ENCODE measurements at regions of chr13 and their contacts with region 1.

Region 1: DNA sequence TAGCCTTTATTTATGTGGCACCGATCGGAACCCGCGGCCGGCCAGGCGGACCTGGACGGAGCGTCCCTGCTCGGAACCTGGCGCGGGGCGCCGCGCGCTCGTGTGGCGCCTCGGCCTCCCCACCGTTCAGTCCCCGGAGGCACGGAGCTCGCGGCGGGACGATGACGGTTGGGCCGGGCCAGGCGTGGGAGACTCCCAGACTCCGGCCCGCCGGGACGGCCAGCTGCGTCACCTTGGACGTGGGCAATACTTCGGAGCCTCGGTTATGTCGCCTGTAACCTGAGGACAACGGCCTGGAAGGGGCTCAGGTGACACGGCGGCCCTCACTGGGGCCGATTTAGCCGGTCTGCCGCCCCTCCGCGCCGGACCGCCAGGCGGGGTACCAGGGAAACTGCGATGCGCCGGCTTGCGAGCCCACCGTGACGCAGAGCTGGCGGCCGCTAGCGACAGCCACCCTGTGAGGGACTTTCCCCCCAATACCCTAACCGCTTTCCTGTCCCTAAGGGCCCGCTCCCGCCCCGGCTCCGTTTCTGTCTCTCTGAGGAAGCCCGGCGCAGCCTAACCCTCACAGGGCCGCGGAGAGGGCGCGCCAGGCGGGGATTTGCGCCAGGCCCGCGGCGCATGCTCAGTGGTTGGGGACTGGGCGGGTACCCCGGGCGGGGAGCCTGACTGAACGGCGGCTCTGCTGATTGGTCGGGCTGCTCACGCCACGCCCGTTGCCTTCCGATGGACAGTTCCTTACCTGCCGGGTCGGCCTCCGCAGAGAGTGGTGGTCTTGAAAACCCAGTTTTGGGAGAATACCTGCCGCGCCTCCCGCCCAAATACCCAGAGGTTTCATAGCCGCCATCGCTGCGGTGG is 109.5 kb upstream of the DOCK9 start:
- DNase-seq: peak; percentile 83 to 95 (median 92)
- ATAC-seq: peak; percentile 85
- H3K4me3 ChIP-seq: peak overlapping the region; percentile 97
- H3K4me3 Mint-ChIP-seq: peak overlapping the region; percentile 92 to 100 (median 98)
- H3K27ac ChIP-seq: peak overlapping the region; percentile 95
- H3K27ac Mint-ChIP-seq: peak overlapping the region; percentile 96 to 99 (median 98)
- H3K4me1 ChIP-seq: peaks cover 29 to 31% of the 10 kb centered on the region in 2 donors
- H3K4me1 Mint-ChIP-seq: peaks cover 26 to 53% (median 42%) of the 10 kb centered on the region in 7 donors
- H3K27me3 ChIP-seq: no peaks in the 10 kb centered on the region
- H3K27me3 Mint-ChIP-seq: peaks cover 0 to 5% (median 3%) of the 10 kb centered on the region in 5 donors

Region 2: DNA sequence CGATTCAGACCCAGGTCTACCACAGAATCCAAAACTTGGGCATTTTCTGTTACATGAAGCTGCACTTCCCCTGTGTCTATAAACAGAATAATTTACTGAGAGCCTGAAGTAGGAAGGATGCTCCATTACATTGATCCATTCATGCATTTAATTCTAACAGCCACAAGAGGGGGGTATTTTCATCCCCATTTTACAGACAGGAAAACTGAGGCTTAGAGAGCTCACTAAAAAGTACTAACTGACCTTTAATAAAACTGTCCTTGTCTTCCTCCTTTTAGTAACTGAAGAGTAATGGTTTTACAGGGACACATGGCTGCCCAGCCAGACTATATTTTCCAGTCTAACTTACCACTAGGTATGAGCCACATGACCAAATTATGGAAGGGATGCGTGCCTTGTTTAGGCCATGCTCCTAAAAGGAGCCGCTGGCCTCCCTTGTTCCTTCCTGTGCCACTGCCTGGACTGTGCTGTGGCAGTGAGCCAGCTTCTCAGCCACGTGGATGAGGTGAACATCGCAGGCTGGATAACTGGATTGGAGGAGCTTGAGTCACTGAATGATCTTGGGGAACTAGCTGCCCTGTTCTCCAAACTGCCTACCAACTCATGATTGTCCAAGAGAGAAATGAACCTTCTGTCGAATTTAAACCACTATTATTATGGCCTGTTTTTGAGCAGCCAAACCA is 217.8 kb before region 1 on chr13:
- CTCF ChIA-PET with region 1: no interaction called
- POLR2A ChIA-PET with region 1: interaction called, 3 read pairs
- intact Hi-C with region 1: loop called in 1 of 2 experiments (anchors 1 kb)
- DNase-seq: peak in 1 of 9 donors; percentile 3
- ATAC-seq: no peak
- H3K4me3 ChIP-seq: no peak overlapping the region
- H3K4me3 Mint-ChIP-seq: no peak overlapping the region
- H3K27ac ChIP-seq: no peak overlapping the region
- H3K27ac Mint-ChIP-seq: peak overlapping the region in 3 of 9 donors; percentile 11 to 57 (median 23)
- H3K4me1 ChIP-seq: no peaks in the 10 kb centered on the region
- H3K4me1 Mint-ChIP-seq: peaks cover 0 to 33% (median 17%) of the 10 kb centered on the region in 7 donors
- H3K27me3 ChIP-seq: no peaks in the 10 kb centered on the region
- H3K27me3 Mint-ChIP-seq: no peaks in the 10 kb centered on the region

Region 3: GRCh38 chr13:99051768-99052455 is 35.4 kb before region 1 on chr13:
- CTCF ChIA-PET with region 1: interaction called, 4 read pairs
- POLR2A ChIA-PET with region 1: interaction called, 77 read pairs
- intact Hi-C with region 1: loop called (anchors 1 to 2 kb)
- DNase-seq: peak in 7 of 9 donors; percentile 48 to 81 (median 71)
- ATAC-seq: peak; percentile 65
- H3K4me3 ChIP-seq: peak overlapping the region; percentile 49
- H3K4me3 Mint-ChIP-seq: peak overlapping the region; percentile 75 to 88 (median 80)
- H3K27ac ChIP-seq: peak overlapping the region; percentile 61
- H3K27ac Mint-ChIP-seq: peak overlapping the region; percentile 72 to 96 (median 91)
- H3K4me1 ChIP-seq: peaks cover 72 to 95% of the 10 kb centered on the region in 2 donors
- H3K4me1 Mint-ChIP-seq: peaks cover 68 to 100% (median 92%) of the 10 kb centered on the region in 7 donors
- H3K27me3 ChIP-seq: no peaks in the 10 kb centered on the region
- H3K27me3 Mint-ChIP-seq: peaks cover 0 to 10% (median 0%) of the 10 kb centered on the region in 5 donors

Region 4: DNA sequence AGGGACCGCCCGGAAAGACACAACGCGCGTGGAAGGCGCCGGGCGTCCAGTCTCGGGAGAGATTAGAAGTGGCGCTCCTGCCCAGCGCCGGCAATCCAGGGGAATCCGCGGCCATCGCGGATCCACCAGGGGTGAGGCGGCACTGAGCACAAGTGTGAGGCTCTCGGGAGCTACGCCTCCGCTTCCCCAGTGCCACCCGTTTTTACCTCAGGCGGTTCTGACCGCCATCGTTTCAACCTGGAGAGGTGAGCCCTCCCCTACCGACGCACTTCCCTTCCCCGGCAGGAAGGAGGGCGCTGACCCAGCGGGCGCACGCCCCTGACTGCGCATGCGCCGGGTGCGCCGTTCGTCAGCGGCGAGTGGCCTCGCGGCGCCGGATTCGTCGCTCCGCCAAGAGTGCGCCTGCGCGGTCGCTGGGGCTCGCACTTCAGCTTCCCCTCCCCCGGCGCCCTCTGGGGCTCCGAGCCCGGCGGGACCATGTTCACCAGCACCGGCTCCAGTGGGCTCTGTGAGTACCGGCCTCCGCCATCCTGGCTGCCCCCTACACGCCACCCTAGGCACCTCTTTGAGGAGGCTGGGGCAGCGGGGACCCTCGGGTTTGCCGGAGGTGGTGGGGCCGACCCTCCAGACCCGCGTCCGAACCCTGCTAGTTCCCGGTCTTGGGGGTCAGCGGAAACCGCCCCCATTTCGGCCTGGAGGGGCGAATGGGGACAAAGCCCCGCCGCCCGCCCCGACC is 113.3 kb after region 1 on chr13 and contains the start of gene UBAC2:
- CTCF ChIA-PET with region 1: no interaction called
- POLR2A ChIA-PET with region 1: interaction called, 23 read pairs
- intact Hi-C with region 1: loop called (anchors 1 kb)
- DNase-seq: peak; percentile 95 to 99 (median 98)
- ATAC-seq: peak; percentile 88
- H3K4me3 ChIP-seq: peak within 1 kb of the TSS; percentile 74
- H3K4me3 Mint-ChIP-seq: peak within 1 kb of the TSS; percentile 90 to 100 (median 97)
- H3K27ac ChIP-seq: peak within 1 kb of the TSS; percentile 99
- H3K27ac Mint-ChIP-seq: peak within 1 kb of the TSS; percentile 92 to 98 (median 95)
- H3K4me1 ChIP-seq: peaks cover 38 to 51% of the 10 kb centered on the region in 2 donors
- H3K4me1 Mint-ChIP-seq: peaks cover 42 to 74% (median 61%) of the 10 kb centered on the region in 7 donors
- H3K27me3 ChIP-seq: no peaks in the 10 kb centered on the region
- H3K27me3 Mint-ChIP-seq: peaks cover 0 to 2% (median 0%) of the 10 kb centered on the region in 5 donors
- total RNA-seq, gene UBAC2: 63.3 to 114 (median 90.2) TPM

Region 5: DNA sequence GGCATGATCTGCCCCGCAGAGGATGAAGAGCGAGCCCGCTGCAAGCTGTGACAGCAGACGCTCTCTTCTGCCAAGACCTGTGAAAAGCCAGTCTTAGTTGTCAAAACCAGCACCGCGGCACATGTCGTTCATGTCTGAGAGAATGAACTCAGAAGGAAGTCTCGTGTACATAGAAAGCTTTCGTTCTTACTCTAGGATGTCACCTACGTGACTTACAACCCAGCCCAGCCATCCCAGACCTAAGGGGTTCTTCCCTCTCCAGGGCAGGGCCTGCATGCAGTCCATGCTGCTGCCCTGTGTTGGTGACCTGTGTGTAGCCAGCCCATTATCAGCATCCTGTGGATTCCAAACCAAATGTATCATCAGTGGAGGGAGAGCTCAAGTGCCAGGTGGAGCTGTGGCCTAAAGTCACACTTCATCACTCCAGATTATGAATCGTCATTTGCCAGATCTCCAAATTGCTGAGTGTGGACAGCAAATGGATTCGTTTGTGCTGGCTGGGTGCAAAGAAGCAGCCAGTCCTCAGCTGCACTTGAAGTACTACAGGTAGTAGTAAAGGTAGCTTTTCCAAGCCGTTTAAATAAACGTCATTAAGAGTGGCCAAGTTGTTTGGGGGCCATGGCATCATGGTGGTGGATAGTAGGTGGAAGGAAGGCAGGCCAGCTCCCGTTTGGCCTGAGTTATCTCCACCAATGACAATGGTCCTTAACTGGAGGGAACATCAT is 293.8 kb after region 1 on chr13:
- CTCF ChIA-PET with region 1: no interaction called
- POLR2A ChIA-PET with region 1: interaction called, 4 read pairs
- intact Hi-C with region 1: loop called in 1 of 2 experiments (anchors 5 kb)
- DNase-seq: peak in 8 of 9 donors; percentile 55 to 73 (median 62)
- ATAC-seq: peak; percentile 51
- H3K4me3 ChIP-seq: peak overlapping the region; percentile 1
- H3K4me3 Mint-ChIP-seq: peak overlapping the region; percentile 63 to 85 (median 76)
- H3K27ac ChIP-seq: peak overlapping the region; percentile 85
- H3K27ac Mint-ChIP-seq: peak overlapping the region; percentile 94 to 99 (median 98)
- H3K4me1 ChIP-seq: peaks cover 77 to 88% of the 10 kb centered on the region in 2 donors
- H3K4me1 Mint-ChIP-seq: peaks cover 48 to 100% (median 98%) of the 10 kb centered on the region in 7 donors
- H3K27me3 ChIP-seq: no peaks in the 10 kb centered on the region
- H3K27me3 Mint-ChIP-seq: no peaks in the 10 kb centered on the region

Region 6: DNA sequence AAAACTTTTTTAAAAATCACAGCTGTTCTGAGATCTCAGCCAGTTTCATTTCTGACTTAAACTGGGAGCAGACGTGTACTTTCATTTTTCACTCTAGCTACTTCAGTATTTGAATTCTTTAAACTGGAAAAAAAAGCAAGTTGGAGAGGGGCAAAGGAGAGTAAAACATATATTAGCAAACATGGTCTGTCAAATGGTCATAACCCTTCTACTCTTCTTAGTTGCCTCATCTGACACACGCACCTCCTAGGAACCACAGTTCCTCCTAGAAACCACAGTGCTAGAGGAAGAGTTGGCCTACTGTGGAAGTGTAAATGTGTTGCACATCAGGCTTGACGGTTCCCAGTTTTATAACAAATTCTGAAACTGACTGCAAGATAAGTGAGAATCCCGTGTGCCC is 461.1 kb after region 1 on chr13:
- CTCF ChIA-PET with region 1: no interaction called
- POLR2A ChIA-PET with region 1: no interaction called
- intact Hi-C with region 1: no loop called
- DNase-seq: no peak
- ATAC-seq: peak; percentile 49
- H3K4me3 ChIP-seq: no peak overlapping the region
- H3K4me3 Mint-ChIP-seq: peak overlapping the region in 1 of 10 donors; percentile 14
- H3K27ac ChIP-seq: peak overlapping the region; percentile 29
- H3K27ac Mint-ChIP-seq: peak overlapping the region; percentile 29 to 97 (median 79)
- H3K4me1 ChIP-seq: peaks cover 3 to 9% of the 10 kb centered on the region in 2 donors
- H3K4me1 Mint-ChIP-seq: peaks cover 4 to 40% (median 19%) of the 10 kb centered on the region in 7 donors
- H3K27me3 ChIP-seq: no peaks in the 10 kb centered on the region
- H3K27me3 Mint-ChIP-seq: no peaks in the 10 kb centered on the region

Region 7: GRCh38 chr13:99656092-99656745 is 568.9 kb after region 1 on chr13:
- CTCF ChIA-PET with region 1: no interaction called
- POLR2A ChIA-PET with region 1: interaction called, 5 read pairs
- intact Hi-C with region 1: loop called in 1 of 2 experiments (anchors 5 kb)
- DNase-seq: peak; percentile 58 to 84 (median 80)
- ATAC-seq: peak; percentile 89
- H3K4me3 ChIP-seq: peak overlapping the region; percentile 47
- H3K4me3 Mint-ChIP-seq: peak overlapping the region; percentile 73 to 90 (median 81)
- H3K27ac ChIP-seq: peak overlapping the region; percentile 82
- H3K27ac Mint-ChIP-seq: peak overlapping the region; percentile 47 to 98 (median 92)
- H3K4me1 ChIP-seq: peaks cover 39 to 41% of the 10 kb centered on the region in 2 donors
- H3K4me1 Mint-ChIP-seq: peaks cover 14 to 54% (median 45%) of the 10 kb centered on the region in 7 donors
- H3K27me3 ChIP-seq: no peaks in the 10 kb centered on the region
- H3K27me3 Mint-ChIP-seq: peaks cover 0 to 27% (median 0%) of the 10 kb centered on the region in 5 donors